Posterior vena cava (tissue), 2 donors: ENCODE measurements at regions of chr3 and their contacts with region 1.

Region 1: GRCh38 chr3:26556637-26557036 is 65.9 kb upstream of the LRRC3B start:
- DNase-seq: no peak

Region 2: DNA sequence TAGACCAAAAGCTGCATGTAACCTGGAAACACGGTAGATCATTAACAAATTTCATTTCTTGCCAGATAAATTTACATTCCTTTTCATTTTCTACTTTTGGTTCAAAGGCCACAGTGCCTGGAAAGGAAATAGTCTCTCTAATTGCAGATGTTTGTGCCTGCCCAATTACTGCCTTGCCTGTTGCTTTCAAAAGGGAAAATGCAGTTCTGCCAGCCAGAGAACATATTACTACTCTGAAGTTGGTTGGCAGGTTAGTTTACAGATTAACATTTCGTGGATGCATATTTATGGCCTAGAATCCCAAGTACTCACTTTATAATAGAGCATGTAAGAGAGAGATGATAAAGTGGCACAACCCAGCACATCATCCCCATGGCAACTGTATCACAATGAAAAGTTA is 58.4 kb before region 1 on chr3:
- intact Hi-C with region 1: no loop called
- DNase-seq: no peak

Region 3: GRCh38 chr3:26590919-26591484 is 34.4 kb after region 1 on chr3:
- intact Hi-C with region 1: loop called in 1 of 2 experiments (anchors 1 kb)
- DNase-seq: no peak